Caco-2 (cell line): ENCODE measurements at regions of chr17 and their contacts with region 1.

Region 1: DNA sequence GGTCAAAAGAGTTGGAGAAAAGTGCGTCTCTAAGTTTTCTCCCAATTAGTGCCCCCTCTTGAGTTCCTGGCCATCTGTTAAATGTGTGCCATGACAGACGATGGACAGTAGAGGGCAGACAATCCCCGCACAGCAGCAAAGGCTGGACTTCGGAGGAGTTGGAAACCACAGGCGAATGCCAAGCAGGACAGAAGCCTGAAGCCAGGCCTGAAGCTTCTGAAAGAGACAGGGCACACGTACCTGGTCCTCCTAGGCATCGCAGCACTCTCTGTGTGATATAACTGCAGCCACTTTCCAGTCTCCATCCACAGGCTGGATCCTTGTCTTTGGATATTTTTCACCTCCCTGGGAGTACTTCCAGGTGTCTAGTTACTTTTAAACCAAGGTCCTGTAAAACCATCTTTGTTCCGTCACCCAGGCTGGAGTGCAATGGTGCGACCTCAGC is 14.5 kb downstream of the C17orf100 start:
- DNase-seq: peak; percentile 66 to 69
- H3K4me3 ChIP-seq: no peak overlapping the region
- H3K4me3 Mint-ChIP-seq: no peak overlapping the region
- H3K27ac Mint-ChIP-seq: no peak overlapping the region
- H3K4me1 ChIP-seq: no peaks in the 10 kb centered on the region
- H3K4me1 Mint-ChIP-seq: no peaks in the 10 kb centered on the region
- H3K27me3 ChIP-seq: no peaks in the 10 kb centered on the region
- H3K27me3 Mint-ChIP-seq: no peaks in the 10 kb centered on the region
- CTCF ChIP-seq: peak; percentile 47 to 81

Region 2: GRCh38 chr17:6523330-6523729 is 142.8 kb before region 1 on chr17:
- CTCF ChIA-PET with region 1: no interaction called
- POLR2A ChIA-PET with region 1: no interaction called
- intact Hi-C with region 1: no loop called
- DNase-seq: peak in 1 of 2 experiments; percentile 42
- H3K4me3 ChIP-seq: no peak overlapping the region
- H3K4me3 Mint-ChIP-seq: no peak overlapping the region
- H3K27ac Mint-ChIP-seq: peak overlapping the region; percentile 45
- H3K4me1 ChIP-seq: no peaks in the 10 kb centered on the region; the same call in 1 of the 2 replicates
- H3K4me1 Mint-ChIP-seq: peaks cover 8% of the 10 kb centered on the region
- H3K27me3 ChIP-seq: no peaks in the 10 kb centered on the region
- H3K27me3 Mint-ChIP-seq: no peaks in the 10 kb centered on the region
- CTCF ChIP-seq: no peak

Region 3: GRCh38 chr17:6677158-6677831 is 11.2 kb after region 1 on chr17:
- CTCF ChIA-PET with region 1: no interaction called
- POLR2A ChIA-PET with region 1: no interaction called
- intact Hi-C with region 1: no loop called
- DNase-seq: no peak
- H3K4me3 ChIP-seq: no peak overlapping the region
- H3K4me3 Mint-ChIP-seq: no peak overlapping the region
- H3K27ac Mint-ChIP-seq: no peak overlapping the region
- H3K4me1 ChIP-seq: no peaks in the 10 kb centered on the region
- H3K4me1 Mint-ChIP-seq: no peaks in the 10 kb centered on the region
- H3K27me3 ChIP-seq: no peaks in the 10 kb centered on the region
- H3K27me3 Mint-ChIP-seq: no peaks in the 10 kb centered on the region
- CTCF ChIP-seq: no peak

Region 4: DNA sequence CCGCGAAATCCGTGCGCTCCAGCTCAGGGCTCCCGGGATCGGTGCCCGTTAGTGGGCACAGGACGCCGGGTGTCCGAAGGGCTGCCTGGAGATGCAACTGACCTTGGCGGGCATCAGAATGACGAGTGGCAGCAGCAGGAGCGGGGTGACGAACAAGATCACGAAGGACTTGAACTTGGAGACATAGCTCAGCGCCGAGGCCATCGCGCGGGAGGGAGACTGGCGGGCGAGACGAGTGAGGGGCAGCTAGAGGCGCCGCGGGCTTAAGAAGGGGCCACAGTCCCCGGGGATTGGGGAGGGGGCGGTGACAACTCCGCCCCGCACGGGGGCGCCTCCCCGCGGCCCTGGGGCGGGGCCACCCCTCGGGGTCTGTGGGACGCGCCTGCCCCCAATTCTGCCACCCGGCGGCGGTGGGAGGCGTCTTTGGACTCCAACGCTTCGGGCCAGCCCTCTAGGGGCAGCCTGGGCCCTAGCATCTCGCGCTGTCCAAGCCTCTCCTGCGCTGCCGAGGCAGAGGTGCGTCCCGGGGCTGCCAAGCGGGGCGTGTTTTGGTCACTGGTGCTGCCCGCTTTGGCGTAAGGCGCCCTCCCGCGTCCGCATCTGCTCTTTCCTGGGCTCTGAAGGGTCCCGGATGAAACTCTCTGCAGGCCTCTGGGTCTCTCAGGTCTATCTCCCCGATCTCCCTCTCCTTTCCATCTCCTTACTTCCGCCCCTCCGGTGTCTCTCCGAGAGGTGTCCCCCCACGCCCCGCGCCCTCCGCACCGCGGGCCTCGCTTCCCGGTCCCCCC is 47.2 kb after region 1 on chr17 and contains the start of gene SLC13A5:
- CTCF ChIA-PET with region 1: no interaction called
- POLR2A ChIA-PET with region 1: no interaction called
- intact Hi-C with region 1: loop called (anchors 5 kb)
- DNase-seq: no peak
- H3K4me3 ChIP-seq: no peak within 1 kb of the TSS
- H3K4me3 Mint-ChIP-seq: no peak within 1 kb of the TSS
- H3K27ac Mint-ChIP-seq: no peak within 1 kb of the TSS
- H3K4me1 ChIP-seq: no peaks in the 10 kb centered on the region
- H3K4me1 Mint-ChIP-seq: no peaks in the 10 kb centered on the region
- H3K27me3 ChIP-seq: no peaks in the 10 kb centered on the region
- H3K27me3 Mint-ChIP-seq: no peaks in the 10 kb centered on the region
- CTCF ChIP-seq: no peak
- total RNA-seq, gene SLC13A5: 0.11 TPM in 1 of 2 replicates, not detected in the other

Region 5: GRCh38 chr17:6721744-6722143 is 55.6 kb after region 1 on chr17:
- CTCF ChIA-PET with region 1: no interaction called
- POLR2A ChIA-PET with region 1: no interaction called
- intact Hi-C with region 1: loop called (anchors 2 kb)
- DNase-seq: no peak
- H3K4me3 ChIP-seq: no peak overlapping the region
- H3K4me3 Mint-ChIP-seq: no peak overlapping the region
- H3K27ac Mint-ChIP-seq: no peak overlapping the region
- H3K4me1 ChIP-seq: no peaks in the 10 kb centered on the region
- H3K4me1 Mint-ChIP-seq: no peaks in the 10 kb centered on the region
- H3K27me3 ChIP-seq: no peaks in the 10 kb centered on the region
- H3K27me3 Mint-ChIP-seq: peaks cover 6% of the 10 kb centered on the region
- CTCF ChIP-seq: no peak

Region 6: GRCh38 chr17:6786618-6787017 is 120.5 kb after region 1 on chr17:
- CTCF ChIA-PET with region 1: no interaction called
- POLR2A ChIA-PET with region 1: no interaction called
- intact Hi-C with region 1: no loop called
- DNase-seq: no peak
- H3K4me3 ChIP-seq: no peak overlapping the region
- H3K4me3 Mint-ChIP-seq: no peak overlapping the region
- H3K27ac Mint-ChIP-seq: no peak overlapping the region
- H3K4me1 ChIP-seq: peaks cover 4% of the 10 kb centered on the region; the same call in 1 of the 2 replicates
- H3K4me1 Mint-ChIP-seq: peaks cover 5% of the 10 kb centered on the region
- H3K27me3 ChIP-seq: no peaks in the 10 kb centered on the region
- H3K27me3 Mint-ChIP-seq: no peaks in the 10 kb centered on the region
- CTCF ChIP-seq: no peak

Region 7: GRCh38 chr17:6843241-6843880 is 177.3 kb after region 1 on chr17:
- CTCF ChIA-PET with region 1: interaction called, 6 read pairs
- POLR2A ChIA-PET with region 1: no interaction called
- intact Hi-C with region 1: loop called (anchors 2 kb)
- DNase-seq: no peak
- H3K4me3 ChIP-seq: no peak overlapping the region
- H3K4me3 Mint-ChIP-seq: no peak overlapping the region
- H3K27ac Mint-ChIP-seq: no peak overlapping the region
- H3K4me1 ChIP-seq: no peaks in the 10 kb centered on the region
- H3K4me1 Mint-ChIP-seq: no peaks in the 10 kb centered on the region
- H3K27me3 ChIP-seq: no peaks in the 10 kb centered on the region
- H3K27me3 Mint-ChIP-seq: peaks cover 3% of the 10 kb centered on the region
- CTCF ChIP-seq: peak; percentile 20 to 25

Region 8: GRCh38 chr17:7004398-7005253 is 338.5 kb after region 1 on chr17:
- CTCF ChIA-PET with region 1: no interaction called
- POLR2A ChIA-PET with region 1: no interaction called
- intact Hi-C with region 1: loop called (anchors 10 kb)
- DNase-seq: peak in 1 of 2 experiments; percentile 62
- H3K4me3 ChIP-seq: no peak overlapping the region
- H3K4me3 Mint-ChIP-seq: no peak overlapping the region
- H3K27ac Mint-ChIP-seq: no peak overlapping the region
- H3K4me1 ChIP-seq: no peaks in the 10 kb centered on the region
- H3K4me1 Mint-ChIP-seq: no peaks in the 10 kb centered on the region
- H3K27me3 ChIP-seq: no peaks in the 10 kb centered on the region
- H3K27me3 Mint-ChIP-seq: no peaks in the 10 kb centered on the region
- CTCF ChIP-seq: peak; percentile 27 to 34